K562 (cell line): ENCODE measurements at regions of chr12 and their contacts with region 1.

Region 1: DNA sequence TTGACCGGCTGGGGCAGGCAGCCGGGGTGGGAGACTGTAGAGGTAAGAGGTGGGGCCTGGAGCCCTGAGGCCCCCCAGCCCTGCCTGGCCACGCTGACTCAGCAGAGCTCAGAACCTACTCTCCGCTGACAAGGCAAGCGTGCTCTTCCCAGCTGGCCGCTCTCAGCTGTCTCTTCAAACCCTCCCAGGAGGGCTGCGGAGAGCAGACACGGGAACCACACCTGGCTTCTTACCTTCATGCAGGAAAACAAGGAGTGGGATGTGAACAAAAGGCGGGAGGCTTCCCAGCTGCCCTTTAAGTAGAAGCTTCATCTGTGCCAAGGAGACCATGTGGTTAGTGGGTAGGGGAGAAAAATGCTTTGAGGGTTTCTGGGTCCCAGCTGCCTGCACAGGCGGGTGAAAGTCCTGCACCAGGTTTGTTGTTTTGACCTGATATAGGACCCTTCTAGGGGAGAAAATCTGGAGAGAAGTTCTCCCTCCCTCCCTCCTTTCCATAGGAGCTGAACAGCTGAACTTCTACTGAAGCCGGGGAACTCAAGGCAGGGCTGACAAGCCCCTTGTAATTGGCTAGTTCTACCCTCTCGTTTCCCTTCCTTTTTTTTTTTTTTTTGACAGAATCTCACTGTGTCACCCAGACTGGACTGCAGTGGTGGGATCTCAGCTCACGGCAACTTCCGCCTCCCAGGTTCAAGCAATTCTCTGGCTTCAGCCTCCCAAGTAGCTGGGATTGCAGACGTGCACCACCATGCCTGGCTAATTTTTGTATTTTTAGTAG is 12.8 kb upstream of the TESC start:
- DNase-seq: peak in 3 of 4 experiments; percentile 30 to 59 (median 51)
- ATAC-seq: peak; percentile 81
- H3K4me3 ChIP-seq: no peak overlapping the region
- H3K27ac ChIP-seq: no peak overlapping the region
- H3K4me1 ChIP-seq: peaks cover 6 to 9% of the 10 kb centered on the region in 2 experiments; a peak in 4 of 5 replicates
- H3K27me3 ChIP-seq: peaks cover 7 to 19% of the 10 kb centered on the region in 2 experiments; a peak in 3 of 5 replicates
- CTCF ChIP-seq: no peak
- EP300 ChIP-seq: no peak
- POLR2A ChIP-seq: no peak
- RAD21 ChIP-seq: no peak

Region 2: GRCh38 chr12:117069926-117070900 is 41.8 kb before region 1 on chr12:
- CTCF ChIA-PET with region 1: no interaction called
- POLR2A ChIA-PET with region 1: no interaction called
- in situ Hi-C with region 1: no loop called
- intact Hi-C with region 1: no loop called
- DNase-seq: no peak
- ATAC-seq: peak; percentile 51; the same call in 2 of the 3 replicates
- H3K4me3 ChIP-seq: no peak overlapping the region
- H3K27ac ChIP-seq: no peak overlapping the region
- H3K4me1 ChIP-seq: peaks cover 9 to 13% of the 10 kb centered on the region in 2 experiments; a peak in 3 of 5 replicates
- H3K27me3 ChIP-seq: no peaks in the 10 kb centered on the region
- CTCF ChIP-seq: no peak
- EP300 ChIP-seq: no peak
- POLR2A ChIP-seq: no peak
- RAD21 ChIP-seq: no peak

Region 3: GRCh38 chr12:117098361-117099217 is 13.4 kb before region 1 on chr12:
- CTCF ChIA-PET with region 1: no interaction called
- POLR2A ChIA-PET with region 1: interaction called, 10 read pairs
- in situ Hi-C with region 1: no loop called
- intact Hi-C with region 1: no loop called
- DNase-seq: peak; percentile 37 to 66 (median 60)
- ATAC-seq: peak; percentile 69
- H3K4me3 ChIP-seq: peak overlapping the region; percentile 85
- H3K27ac ChIP-seq: peak overlapping the region; percentile 68; the same call in 2 of the 3 replicates
- H3K4me1 ChIP-seq: peaks cover 10 to 37% of the 10 kb centered on the region in 2 experiments
- H3K27me3 ChIP-seq: peaks cover 2 to 24% of the 10 kb centered on the region in 2 experiments; a peak in 4 of 5 replicates
- CTCF ChIP-seq: no peak
- EP300 ChIP-seq: no peak
- POLR2A ChIP-seq: no peak
- RAD21 ChIP-seq: no peak

Region 4: DNA sequence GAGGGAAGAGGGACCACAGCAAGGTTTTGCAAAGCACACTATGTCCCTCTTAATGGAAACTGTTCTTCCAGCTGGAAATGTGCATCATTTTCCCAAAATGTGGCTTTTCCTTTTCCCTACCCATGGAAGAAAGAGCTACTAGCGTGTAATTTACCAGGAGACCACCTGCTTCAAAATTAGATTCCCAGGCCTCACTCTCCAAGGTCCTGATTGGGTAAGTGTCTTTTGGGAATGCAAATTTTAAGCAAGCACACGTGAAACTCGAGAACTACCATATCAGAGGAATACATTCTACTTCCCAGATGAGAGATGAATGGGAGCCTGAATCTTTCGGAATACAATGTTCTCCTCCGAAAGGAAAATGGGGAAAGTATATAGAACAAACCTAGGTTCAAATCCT is 451.0 kb after region 1 on chr12:
- CTCF ChIA-PET with region 1: no interaction called
- POLR2A ChIA-PET with region 1: no interaction called
- in situ Hi-C with region 1: no loop called
- intact Hi-C with region 1: no loop called
- DNase-seq: no peak
- ATAC-seq: no peak
- H3K4me3 ChIP-seq: no peak overlapping the region
- H3K27ac ChIP-seq: no peak overlapping the region
- H3K4me1 ChIP-seq: no peaks in the 10 kb centered on the region
- H3K27me3 ChIP-seq: no peaks in the 10 kb centered on the region; a peak in 1 of 5 replicates
- CTCF ChIP-seq: no peak
- EP300 ChIP-seq: no peak
- POLR2A ChIP-seq: no peak
- RAD21 ChIP-seq: no peak